T-cell (primary cell): ENCODE measurements at regions of chr14 and their contacts with region 1.

Region 1: DNA sequence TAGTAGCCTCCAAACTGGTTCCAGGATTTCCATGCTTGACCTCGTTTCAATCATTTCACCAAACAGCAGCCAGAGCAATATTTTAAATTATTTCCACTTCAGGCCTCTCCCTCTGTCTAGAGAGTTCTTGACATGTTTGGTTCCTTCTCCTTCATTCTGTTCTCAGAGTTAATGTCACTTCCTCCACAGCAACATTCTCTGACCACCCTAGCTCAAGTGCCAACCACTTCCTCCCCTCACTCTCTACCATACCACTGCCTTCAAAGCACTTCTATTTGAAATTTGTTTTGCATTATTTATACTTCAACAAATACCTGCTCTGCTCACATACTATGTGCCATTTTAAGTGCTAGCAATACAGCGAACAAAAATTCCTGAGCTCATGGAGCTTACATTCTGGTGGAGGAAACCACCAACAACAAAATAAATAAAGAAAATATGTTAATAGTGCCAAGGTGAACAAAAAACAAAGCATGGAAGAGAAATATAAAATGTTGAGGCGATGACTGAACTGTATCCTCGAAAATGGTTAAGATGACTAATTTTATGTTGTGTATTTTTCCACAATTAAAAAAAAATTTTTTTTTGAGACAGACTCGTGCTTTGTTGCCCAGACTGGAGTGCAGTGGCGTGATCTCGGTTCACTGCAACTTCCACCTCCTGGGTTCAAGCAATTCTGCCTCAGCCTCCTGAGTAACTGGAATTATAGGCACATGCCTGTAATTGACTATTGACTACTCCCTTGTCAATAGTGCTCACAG is 17.3 kb downstream of the BAZ1A start:
- DNase-seq: peak in 28 of 35 experiments; percentile 8 to 65 (median 30)
- ATAC-seq: peak; percentile 69 to 97 (median 91)
- H3K4me3 ChIP-seq: no peak overlapping the region
- H3K4me3 Mint-ChIP-seq: peak overlapping the region; percentile 5 to 59 (median 22)
- H3K27ac ChIP-seq: peak overlapping the region; percentile 52
- H3K27ac Mint-ChIP-seq: peak overlapping the region; percentile 68 to 85
- H3K4me1 ChIP-seq: peaks cover 9 to 28% of the 10 kb centered on the region in 2 experiments
- H3K4me1 Mint-ChIP-seq: peaks cover 48 to 55% (median 48%) of the 10 kb centered on the region in 3 donors
- H3K27me3 ChIP-seq: no peaks in the 10 kb centered on the region
- H3K27me3 Mint-ChIP-seq: no peaks in the 10 kb centered on the region

Region 2: GRCh38 chr14:34436118-34436880 is 421.6 kb before region 1 on chr14:
- CTCF ChIA-PET with region 1: no interaction called
- POLR2A ChIA-PET with region 1: no interaction called
- DNase-seq: no peak
- ATAC-seq: no peak
- H3K4me3 ChIP-seq: no peak overlapping the region
- H3K4me3 Mint-ChIP-seq: no peak overlapping the region
- H3K27ac ChIP-seq: no peak overlapping the region
- H3K27ac Mint-ChIP-seq: no peak overlapping the region
- H3K4me1 ChIP-seq: no peaks in the 10 kb centered on the region
- H3K4me1 Mint-ChIP-seq: peaks cover 0 to 5% (median 0%) of the 10 kb centered on the region in 3 donors
- H3K27me3 ChIP-seq: no peaks in the 10 kb centered on the region
- H3K27me3 Mint-ChIP-seq: no peaks in the 10 kb centered on the region

Region 3: DNA sequence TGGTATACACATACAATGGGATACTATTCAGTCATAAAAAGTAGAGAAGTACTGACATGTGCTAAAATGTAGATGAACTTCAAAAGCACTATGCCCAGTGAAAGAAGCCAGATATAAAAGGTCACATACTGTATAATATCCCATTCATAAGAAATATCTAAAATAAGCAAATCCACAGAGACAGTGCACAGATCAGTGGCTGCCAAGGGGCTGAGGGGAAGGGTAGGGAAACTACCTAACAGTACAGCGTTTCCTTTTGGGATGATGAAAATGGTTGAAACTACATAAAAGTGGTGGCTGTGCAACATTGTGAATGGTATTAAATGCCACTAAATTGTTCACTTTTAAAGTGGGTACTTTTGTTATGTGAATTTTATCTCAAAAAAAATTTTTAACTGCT is 330.3 kb before region 1 on chr14:
- CTCF ChIA-PET with region 1: no interaction called
- POLR2A ChIA-PET with region 1: interaction called in 1 of 2 experiments, 13 read pairs
- DNase-seq: no peak
- ATAC-seq: no peak
- H3K4me3 ChIP-seq: no peak overlapping the region
- H3K4me3 Mint-ChIP-seq: no peak overlapping the region
- H3K27ac ChIP-seq: no peak overlapping the region
- H3K27ac Mint-ChIP-seq: no peak overlapping the region
- H3K4me1 ChIP-seq: no peaks in the 10 kb centered on the region
- H3K4me1 Mint-ChIP-seq: peaks cover 0 to 5% (median 0%) of the 10 kb centered on the region in 3 donors
- H3K27me3 ChIP-seq: no peaks in the 10 kb centered on the region
- H3K27me3 Mint-ChIP-seq: no peaks in the 10 kb centered on the region

Region 4: GRCh38 chr14:34875031-34875922 is 17.4 kb after region 1 on chr14 and contains the start of gene BAZ1A:
- CTCF ChIA-PET with region 1: interaction called in 1 of 2 experiments, 6 read pairs
- POLR2A ChIA-PET with region 1: interaction called, 5 to 13 read pairs
- DNase-seq: peak in 30 of 35 experiments; percentile 1 to 69 (median 13)
- ATAC-seq: peak; percentile 24 to 33 (median 28)
- H3K4me3 ChIP-seq: peak within 1 kb of the TSS; percentile 92 to 94
- H3K4me3 Mint-ChIP-seq: peak within 1 kb of the TSS; percentile 99 to 100 (median 99)
- H3K27ac ChIP-seq: peak within 1 kb of the TSS; percentile 100
- H3K27ac Mint-ChIP-seq: peak within 1 kb of the TSS; percentile 98 to 99
- H3K4me1 ChIP-seq: peaks cover 11 to 19% of the 10 kb centered on the region in 2 experiments
- H3K4me1 Mint-ChIP-seq: peaks cover 33 to 38% (median 37%) of the 10 kb centered on the region in 3 donors
- H3K27me3 ChIP-seq: no peaks in the 10 kb centered on the region
- H3K27me3 Mint-ChIP-seq: no peaks in the 10 kb centered on the region
- total RNA-seq, gene BAZ1A: 38.0 to 56.2 (median 44.6) TPM

Region 5: DNA sequence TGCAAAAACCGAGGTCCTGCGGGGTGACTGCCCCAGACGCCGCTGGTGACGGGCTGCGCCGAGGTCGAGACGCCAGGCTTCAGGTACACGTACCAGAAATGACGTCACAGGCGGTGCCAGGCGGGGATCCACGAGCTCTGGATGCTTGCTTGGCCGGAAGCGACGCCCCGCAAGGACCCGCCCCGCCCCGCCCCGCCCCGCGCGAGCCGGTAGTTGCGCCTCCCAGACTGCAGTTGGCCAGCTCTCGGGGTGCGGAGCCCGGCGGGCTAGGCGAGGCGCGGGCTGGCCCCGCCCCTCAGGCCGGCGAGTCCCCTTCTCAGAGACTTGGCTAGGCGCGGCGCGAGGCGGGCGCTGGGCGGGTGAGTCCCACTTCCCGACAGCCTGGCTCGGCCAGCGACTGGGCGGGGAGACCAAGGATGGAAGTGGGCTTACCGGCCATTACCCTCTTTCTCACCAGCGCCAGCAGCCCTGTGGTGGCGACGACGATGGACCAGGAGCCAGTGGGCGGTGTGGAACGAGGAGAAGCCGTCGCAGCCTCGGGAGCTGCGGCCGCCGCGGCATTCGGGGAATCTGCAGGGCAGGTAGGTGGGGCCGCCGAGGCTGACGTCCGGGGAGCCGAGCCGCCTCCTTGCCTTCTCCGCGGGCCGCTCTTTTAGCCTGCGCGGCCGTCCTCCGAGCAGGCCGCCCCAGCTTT is 188.3 kb after region 1 on chr14 and contains the start of gene FAM177A1:
- CTCF ChIA-PET with region 1: no interaction called
- POLR2A ChIA-PET with region 1: interaction called, 10 to 11 read pairs
- DNase-seq: peak; percentile 93 to 100 (median 100)
- ATAC-seq: peak; percentile 83 to 93 (median 91)
- H3K4me3 ChIP-seq: peak within 1 kb of the TSS; percentile 71 to 91
- H3K4me3 Mint-ChIP-seq: peak within 1 kb of the TSS; percentile 73 to 88 (median 85)
- H3K27ac ChIP-seq: peak within 1 kb of the TSS; percentile 99
- H3K27ac Mint-ChIP-seq: peak within 1 kb of the TSS; percentile 95 to 96
- H3K4me1 ChIP-seq: peaks cover 4 to 12% of the 10 kb centered on the region in 2 experiments
- H3K4me1 Mint-ChIP-seq: peaks cover 25 to 31% (median 27%) of the 10 kb centered on the region in 3 donors
- H3K27me3 ChIP-seq: no peaks in the 10 kb centered on the region
- H3K27me3 Mint-ChIP-seq: no peaks in the 10 kb centered on the region
- total RNA-seq, gene FAM177A1: 35.7 to 141 (median 38.7) TPM